GM12878 (cell line): ENCODE measurements at regions of chr10 and their contacts with region 1.

Region 1: DNA sequence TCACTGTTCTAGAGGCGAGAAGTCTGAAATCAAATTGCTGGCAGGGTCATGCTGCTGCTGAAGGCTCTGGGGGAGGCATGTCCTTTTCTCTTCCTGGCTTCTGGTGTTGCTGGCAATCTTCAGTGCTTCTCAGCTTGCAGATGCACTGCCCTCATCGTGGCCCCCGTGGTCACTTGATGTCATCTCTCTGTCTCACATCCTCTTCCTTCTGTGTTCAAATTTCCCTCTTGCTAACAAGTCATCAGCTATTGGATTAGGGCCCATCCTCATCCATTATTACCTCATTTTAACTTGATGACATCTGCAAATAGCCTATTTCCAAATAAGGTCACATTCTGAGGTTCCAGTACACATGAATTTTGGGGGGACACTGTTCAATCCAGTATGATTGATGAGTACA is 36.6 kb upstream of the SRGN start:
- DNase-seq: no peak
- ATAC-seq: peak; percentile 64
- H3K4me3 ChIP-seq: no peak overlapping the region
- H3K27ac ChIP-seq: peak overlapping the region; percentile 85
- H3K4me1 ChIP-seq: peaks cover 89% of the 10 kb centered on the region
- H3K27me3 ChIP-seq: no peaks in the 10 kb centered on the region
- CTCF ChIP-seq: no peak
- EP300 ChIP-seq: peak in 1 of 2 experiments; percentile 87; a peak in 1 of 4 replicates
- POLR2A ChIP-seq: no peak
- RAD21 ChIP-seq: no peak

Region 2: DNA sequence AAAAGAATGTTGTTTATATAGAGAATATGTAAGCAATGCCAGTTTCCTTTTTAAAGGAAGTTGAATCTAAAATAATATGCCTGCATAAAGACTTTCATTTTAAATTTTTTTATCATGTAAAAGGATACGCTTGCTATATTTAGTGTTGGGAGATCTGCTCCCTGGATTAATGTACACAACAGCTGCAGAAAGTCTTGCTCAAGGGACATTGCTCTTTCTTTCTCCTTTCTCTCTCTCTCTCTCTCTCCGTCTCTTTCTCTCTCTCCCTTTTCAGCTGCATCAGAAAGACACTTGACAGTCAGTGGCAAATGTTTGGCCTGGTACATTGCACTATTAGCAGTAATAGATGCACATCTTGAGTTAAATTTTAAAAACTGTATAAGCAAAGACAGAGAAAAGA is 941.3 kb before region 1 on chr10:
- CTCF ChIA-PET with region 1: no interaction called
- POLR2A ChIA-PET with region 1: no interaction called
- RAD21 ChIA-PET with region 1: no interaction called
- SMC1A ChIA-PET with region 1: no interaction called
- in situ Hi-C with region 1: no loop called
- intact Hi-C with region 1: no loop called
- DNase-seq: no peak
- ATAC-seq: no peak
- H3K4me3 ChIP-seq: no peak overlapping the region
- H3K27ac ChIP-seq: no peak overlapping the region
- H3K4me1 ChIP-seq: no peaks in the 10 kb centered on the region
- H3K27me3 ChIP-seq: no peaks in the 10 kb centered on the region
- CTCF ChIP-seq: no peak
- EP300 ChIP-seq: no peak
- POLR2A ChIP-seq: no peak
- RAD21 ChIP-seq: no peak

Region 3: DNA sequence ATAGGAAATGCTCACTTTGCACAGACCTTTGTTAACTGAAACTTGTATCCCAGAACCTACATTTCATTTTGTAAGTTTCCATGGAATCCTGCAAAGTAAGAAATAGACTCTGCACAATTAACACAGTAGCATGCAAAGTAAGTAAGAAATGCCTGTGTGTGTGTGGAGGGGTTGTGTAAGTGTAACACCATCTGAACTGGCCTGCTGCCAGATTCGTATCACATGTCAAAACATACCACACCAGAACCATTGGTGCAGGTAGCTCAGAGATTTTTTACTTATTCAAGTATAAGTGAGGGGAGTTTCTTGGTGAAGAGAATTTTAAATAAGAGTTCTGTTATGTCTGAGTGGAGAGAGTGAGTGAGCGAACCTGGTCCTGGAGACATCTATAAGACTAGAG is 113.2 kb before region 1 on chr10:
- CTCF ChIA-PET with region 1: no interaction called
- POLR2A ChIA-PET with region 1: no interaction called
- RAD21 ChIA-PET with region 1: no interaction called
- SMC1A ChIA-PET with region 1: no interaction called
- in situ Hi-C with region 1: no loop called
- intact Hi-C with region 1: no loop called
- DNase-seq: no peak
- ATAC-seq: no peak
- H3K4me3 ChIP-seq: no peak overlapping the region
- H3K27ac ChIP-seq: no peak overlapping the region
- H3K4me1 ChIP-seq: no peaks in the 10 kb centered on the region
- H3K27me3 ChIP-seq: no peaks in the 10 kb centered on the region
- CTCF ChIP-seq: no peak
- EP300 ChIP-seq: no peak
- POLR2A ChIP-seq: no peak
- RAD21 ChIP-seq: no peak

Region 4: GRCh38 chr10:69025370-69025896 is 25.9 kb before region 1 on chr10:
- CTCF ChIA-PET with region 1: no interaction called
- POLR2A ChIA-PET with region 1: interaction called, 11 read pairs
- RAD21 ChIA-PET with region 1: interaction called, 25 read pairs
- SMC1A ChIA-PET with region 1: interaction called, 60 read pairs
- in situ Hi-C with region 1: no loop called
- intact Hi-C with region 1: no loop called
- DNase-seq: no peak
- ATAC-seq: no peak
- H3K4me3 ChIP-seq: no peak overlapping the region
- H3K27ac ChIP-seq: no peak overlapping the region
- H3K4me1 ChIP-seq: peaks cover 16% of the 10 kb centered on the region
- H3K27me3 ChIP-seq: no peaks in the 10 kb centered on the region
- CTCF ChIP-seq: no peak
- EP300 ChIP-seq: no peak
- POLR2A ChIP-seq: no peak
- RAD21 ChIP-seq: no peak

Region 5: DNA sequence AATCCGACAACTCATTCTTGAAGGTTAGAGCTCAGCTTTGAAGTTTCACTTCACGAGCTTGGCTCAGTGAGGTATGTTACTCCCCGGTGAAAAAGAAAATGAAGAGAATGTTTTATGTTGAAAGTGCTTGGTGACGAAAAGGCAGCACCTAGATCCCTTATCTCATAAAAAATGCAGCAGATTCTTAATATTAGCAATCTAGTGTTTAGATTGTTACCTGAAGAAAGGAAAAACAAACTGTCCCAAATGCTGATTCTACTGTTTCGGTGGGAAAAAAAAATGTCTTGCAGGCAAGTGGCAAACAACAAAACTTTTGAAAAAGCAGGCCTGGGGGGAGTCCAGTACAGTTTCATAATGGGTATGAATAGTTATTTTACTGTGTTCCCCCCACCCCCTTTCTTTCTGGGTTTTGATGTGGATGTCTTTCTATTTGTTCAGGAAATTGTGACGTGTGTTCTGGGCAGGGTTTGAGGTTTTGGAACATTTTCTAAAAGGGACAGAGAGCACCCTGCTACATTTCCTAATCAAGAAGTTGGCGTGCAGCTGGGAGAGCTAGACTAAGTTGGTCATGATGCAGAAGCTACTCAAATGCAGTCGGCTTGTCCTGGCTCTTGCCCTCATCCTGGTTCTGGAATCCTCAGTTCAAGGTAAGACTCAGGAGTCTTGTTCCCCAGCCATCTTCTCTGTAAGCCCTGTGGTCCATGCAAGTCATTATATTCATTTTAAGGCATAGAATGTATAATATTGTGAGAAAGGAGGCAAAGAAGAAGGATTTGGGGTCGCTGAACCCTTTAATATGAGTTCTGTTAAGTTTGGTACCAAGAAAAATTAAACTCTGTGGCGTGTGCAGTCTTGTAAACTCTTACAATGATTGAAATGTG is 36.5 kb after region 1 on chr10 and contains the start of gene SRGN:
- CTCF ChIA-PET with region 1: interaction called, 71 read pairs
- POLR2A ChIA-PET with region 1: interaction called, 312 read pairs
- RAD21 ChIA-PET with region 1: interaction called, 544 read pairs
- SMC1A ChIA-PET with region 1: interaction called, 355 read pairs
- in situ Hi-C with region 1: no loop called
- intact Hi-C with region 1: loop called (anchors 1 kb)
- DNase-seq: peak; percentile 97
- ATAC-seq: peak; percentile 65
- H3K4me3 ChIP-seq: peak within 1 kb of the TSS; percentile 73
- H3K27ac ChIP-seq: peak within 1 kb of the TSS; percentile 97
- H3K4me1 ChIP-seq: peaks cover 18% of the 10 kb centered on the region
- H3K27me3 ChIP-seq: no peaks in the 10 kb centered on the region
- CTCF ChIP-seq: no peak
- EP300 ChIP-seq: peak; percentile 77 to 87; a peak in 3 of 4 replicates
- POLR2A ChIP-seq: peak; percentile 96
- RAD21 ChIP-seq: no peak
- polyA plus RNA-seq, gene SRGN: 1,115 to 1,176 TPM

Region 6: DNA sequence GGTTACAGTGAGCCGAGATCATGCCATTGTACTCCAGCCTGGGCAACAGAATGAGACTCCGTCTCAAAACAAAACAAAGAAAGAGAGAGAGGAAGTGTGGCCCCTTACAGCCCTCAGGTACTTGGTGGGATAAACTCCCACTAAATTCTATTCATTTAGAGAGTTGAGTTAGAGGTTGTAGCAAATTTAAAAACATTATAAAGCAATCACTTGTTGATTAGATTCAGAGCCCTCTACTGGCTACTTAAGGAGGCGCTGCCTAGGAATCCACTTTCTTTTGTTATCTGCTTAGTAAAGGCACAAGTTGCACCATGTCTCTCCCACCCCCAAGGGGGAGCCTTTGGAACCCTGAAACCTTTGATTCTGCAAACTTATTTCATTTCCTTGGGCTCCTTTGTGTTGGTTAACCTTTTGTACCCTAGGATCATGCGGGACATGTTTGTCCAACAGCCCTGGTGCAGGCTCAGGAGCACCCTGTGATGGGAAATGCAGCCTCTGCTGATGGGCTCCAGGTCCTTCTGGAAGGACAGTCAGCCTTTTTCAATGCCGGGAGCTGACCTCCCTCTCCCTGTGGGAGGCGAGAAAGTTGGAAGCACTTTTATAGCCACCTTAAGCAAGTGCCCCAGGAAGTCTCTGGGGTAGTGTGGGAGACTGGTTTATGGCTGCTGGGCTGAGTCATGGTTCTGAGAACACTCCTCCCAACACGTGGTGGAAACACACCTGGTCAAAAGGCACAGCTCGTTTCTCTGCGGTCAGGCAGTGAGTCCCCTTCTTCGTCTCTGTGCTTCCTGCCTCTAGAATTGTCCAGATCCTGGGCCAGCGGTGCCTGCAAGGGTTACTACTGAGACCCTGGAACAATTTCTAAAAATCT is 171.1 kb after region 1 on chr10:
- CTCF ChIA-PET with region 1: no interaction called
- POLR2A ChIA-PET with region 1: interaction called, 10 read pairs
- RAD21 ChIA-PET with region 1: interaction called, 3 read pairs
- SMC1A ChIA-PET with region 1: no interaction called
- in situ Hi-C with region 1: no loop called
- intact Hi-C with region 1: no loop called
- DNase-seq: peak; percentile 88
- ATAC-seq: peak; percentile 97
- H3K4me3 ChIP-seq: peak overlapping the region; percentile 63
- H3K27ac ChIP-seq: peak overlapping the region; percentile 80
- H3K4me1 ChIP-seq: peaks cover 25% of the 10 kb centered on the region
- H3K27me3 ChIP-seq: no peaks in the 10 kb centered on the region
- CTCF ChIP-seq: peak; percentile 71 to 82 (median 77)
- EP300 ChIP-seq: peak; percentile 83 to 86
- POLR2A ChIP-seq: peak; percentile 69
- RAD21 ChIP-seq: peak; percentile 62